ENCODE measurements at regions of chr10 and their contacts with region 1.

Region 1: DNA sequence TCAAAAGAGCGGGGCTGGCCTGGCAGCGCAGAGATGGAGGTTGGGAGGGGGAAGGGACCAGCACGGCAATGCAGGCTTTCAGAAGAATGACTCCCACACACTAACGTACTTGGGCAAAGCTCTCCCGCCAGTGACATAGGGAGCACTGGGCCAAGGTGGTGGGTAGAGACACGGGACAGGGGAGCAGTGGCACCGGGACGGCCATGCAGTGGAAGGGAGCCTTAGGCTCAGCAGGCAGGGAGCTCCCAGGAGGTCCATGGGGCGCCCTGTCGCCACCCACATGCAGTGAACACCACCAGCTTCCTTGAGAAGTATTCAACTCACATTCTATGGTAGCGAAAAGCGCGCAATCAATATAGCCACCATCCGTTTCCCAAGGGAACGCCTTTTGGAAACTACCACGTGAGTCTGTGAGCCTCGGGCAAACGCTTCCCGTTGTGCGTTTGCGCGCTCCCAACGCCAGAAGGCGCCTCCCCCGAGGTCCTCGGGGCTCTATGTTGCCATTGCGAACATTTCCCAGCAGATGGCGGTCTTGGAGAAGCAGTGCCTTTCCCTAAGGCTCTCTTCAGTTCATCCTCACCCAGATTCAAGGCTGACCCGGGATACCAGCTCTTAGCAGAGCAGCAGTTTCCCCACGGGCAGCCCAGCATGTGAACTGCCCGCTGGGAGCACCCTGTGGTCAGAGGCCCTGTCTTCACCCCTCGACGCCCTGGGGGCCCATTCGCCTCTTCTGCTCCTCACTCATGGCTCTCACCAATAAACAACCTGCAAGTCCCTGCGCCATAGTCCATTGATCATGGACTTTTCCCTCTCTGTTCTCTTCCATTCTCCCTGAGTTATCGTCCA is 16.4 kb upstream of the OPALIN start:
- DNase-seq: peak; percentile 45
- ATAC-seq: peak; percentile 91
- H3K4me3 ChIP-seq: peak overlapping the region; percentile 68; the same call in 1 of the 2 replicates
- H3K27ac ChIP-seq: no peak overlapping the region
- H3K4me1 ChIP-seq: peaks cover 8% of the 10 kb centered on the region
- H3K27me3 ChIP-seq: no peaks in the 10 kb centered on the region; a peak in 1 of 4 replicates
- CTCF ChIP-seq: peak; percentile 98 to 100 (median 99)
- EP300 ChIP-seq: no peak
- POLR2A ChIP-seq: no peak
- RAD21 ChIP-seq: peak; percentile 87

Region 2: DNA sequence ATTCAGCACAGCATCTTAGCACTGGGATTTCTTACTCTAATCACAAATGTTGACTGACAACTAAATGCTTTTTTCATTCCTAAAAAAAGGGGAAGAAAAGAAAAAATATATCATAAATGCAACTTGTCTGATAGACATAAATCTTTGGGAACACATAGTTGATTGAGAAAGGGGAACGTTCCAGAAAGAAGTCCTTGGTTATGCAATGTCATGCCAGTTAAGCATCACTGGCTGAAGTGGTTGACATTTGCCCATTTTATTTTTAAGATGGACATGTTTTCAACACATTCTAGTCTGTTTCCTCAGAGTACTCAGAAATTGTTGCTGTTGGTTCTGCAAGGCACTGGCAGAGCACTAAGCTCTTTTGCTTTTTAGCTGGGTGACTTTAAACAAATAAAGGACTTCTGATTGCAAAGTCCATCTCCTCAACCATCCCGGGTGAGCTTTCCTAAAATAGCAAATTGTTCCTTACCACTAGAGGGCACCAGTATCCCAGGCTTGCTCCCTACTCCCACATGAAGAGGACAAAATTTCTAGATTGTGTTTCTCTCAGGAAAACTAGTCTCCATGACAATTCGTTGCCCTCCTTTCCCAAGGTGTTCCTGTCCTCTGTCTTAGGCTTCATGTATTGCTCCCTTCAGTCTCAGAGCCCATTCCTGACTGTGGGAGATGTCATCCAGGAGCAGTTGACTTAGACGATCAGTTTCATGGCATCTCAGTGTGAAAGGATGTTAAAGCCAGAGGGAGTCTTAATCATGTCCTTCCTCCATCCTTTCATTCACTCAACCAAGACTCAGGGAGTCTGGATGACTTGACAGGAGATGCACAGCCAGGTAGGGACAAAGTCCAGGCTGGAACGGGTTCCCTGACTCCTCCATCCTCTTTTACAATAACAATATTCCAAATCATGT is 40.3 kb before region 1 on chr10:
- CTCF ChIA-PET with region 1: interaction called, 13 read pairs
- POLR2A ChIA-PET with region 1: no interaction called
- RAD21 ChIA-PET with region 1: no interaction called
- SMC1A ChIA-PET with region 1: no interaction called
- in situ Hi-C with region 1: no loop called
- intact Hi-C with region 1: no loop called
- DNase-seq: no peak
- ATAC-seq: no peak; the same call in 2 of the 3 replicates
- H3K4me3 ChIP-seq: no peak overlapping the region
- H3K27ac ChIP-seq: no peak overlapping the region
- H3K4me1 ChIP-seq: no peaks in the 10 kb centered on the region
- H3K27me3 ChIP-seq: no peaks in the 10 kb centered on the region
- CTCF ChIP-seq: peak; percentile 62 to 77 (median 62); a peak in 5 of 6 replicates
- EP300 ChIP-seq: no peak
- POLR2A ChIP-seq: no peak
- RAD21 ChIP-seq: peak; percentile 47

Region 3: DNA sequence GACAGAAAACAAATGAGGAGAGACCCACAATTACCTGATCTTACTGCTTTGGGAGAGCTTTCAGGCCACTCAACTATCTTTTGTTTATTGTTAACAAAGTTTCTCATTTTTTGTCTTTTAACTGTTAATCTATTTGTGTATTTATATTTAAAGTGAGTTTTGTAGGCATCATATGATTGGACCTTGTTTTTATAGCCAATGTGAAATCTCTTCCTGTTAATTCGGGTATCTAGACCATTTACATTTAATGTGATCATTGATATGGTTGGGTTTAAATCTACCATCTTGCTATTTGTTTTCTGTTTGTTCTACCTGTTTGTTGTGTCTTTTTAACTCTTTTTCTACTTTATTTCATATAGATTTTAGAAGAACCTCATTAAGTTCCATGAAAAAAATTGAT is 28.9 kb before region 1 on chr10:
- CTCF ChIA-PET with region 1: interaction called, 18 read pairs
- POLR2A ChIA-PET with region 1: no interaction called
- RAD21 ChIA-PET with region 1: no interaction called
- SMC1A ChIA-PET with region 1: no interaction called
- in situ Hi-C with region 1: no loop called
- intact Hi-C with region 1: no loop called
- DNase-seq: no peak
- ATAC-seq: no peak
- H3K4me3 ChIP-seq: no peak overlapping the region
- H3K27ac ChIP-seq: no peak overlapping the region
- H3K4me1 ChIP-seq: no peaks in the 10 kb centered on the region
- H3K27me3 ChIP-seq: no peaks in the 10 kb centered on the region
- CTCF ChIP-seq: no peak
- EP300 ChIP-seq: no peak
- POLR2A ChIP-seq: no peak
- RAD21 ChIP-seq: no peak

Region 4: GRCh38 chr10:96395931-96396877 is 21.0 kb after region 1 on chr10:
- CTCF ChIA-PET with region 1: interaction called, 29 read pairs
- POLR2A ChIA-PET with region 1: no interaction called
- RAD21 ChIA-PET with region 1: interaction called, 5 read pairs
- SMC1A ChIA-PET with region 1: interaction called, 5 read pairs
- in situ Hi-C with region 1: no loop called
- intact Hi-C with region 1: no loop called
- DNase-seq: no peak
- ATAC-seq: peak; percentile 97
- H3K4me3 ChIP-seq: no peak overlapping the region
- H3K27ac ChIP-seq: no peak overlapping the region
- H3K4me1 ChIP-seq: no peaks in the 10 kb centered on the region
- H3K27me3 ChIP-seq: peaks cover 3 to 4% of the 10 kb centered on the region in 2 experiments; a peak in 3 of 4 replicates
- CTCF ChIP-seq: peak; percentile 86 to 91 (median 87)
- EP300 ChIP-seq: no peak
- POLR2A ChIP-seq: no peak
- RAD21 ChIP-seq: peak; percentile 84

Region 5: GRCh38 chr10:96585736-96586418 is 210.7 kb after region 1 on chr10:
- CTCF ChIA-PET with region 1: no interaction called
- POLR2A ChIA-PET with region 1: no interaction called
- RAD21 ChIA-PET with region 1: no interaction called
- SMC1A ChIA-PET with region 1: no interaction called
- in situ Hi-C with region 1: no loop called
- intact Hi-C with region 1: no loop called
- DNase-seq: no peak
- ATAC-seq: peak; percentile 20
- H3K4me3 ChIP-seq: peak overlapping the region; percentile 72
- H3K27ac ChIP-seq: peak overlapping the region; percentile 96
- H3K4me1 ChIP-seq: peaks cover 22% of the 10 kb centered on the region
- H3K27me3 ChIP-seq: no peaks in the 10 kb centered on the region
- CTCF ChIP-seq: no peak
- EP300 ChIP-seq: no peak
- POLR2A ChIP-seq: no peak
- RAD21 ChIP-seq: no peak

Region 6: DNA sequence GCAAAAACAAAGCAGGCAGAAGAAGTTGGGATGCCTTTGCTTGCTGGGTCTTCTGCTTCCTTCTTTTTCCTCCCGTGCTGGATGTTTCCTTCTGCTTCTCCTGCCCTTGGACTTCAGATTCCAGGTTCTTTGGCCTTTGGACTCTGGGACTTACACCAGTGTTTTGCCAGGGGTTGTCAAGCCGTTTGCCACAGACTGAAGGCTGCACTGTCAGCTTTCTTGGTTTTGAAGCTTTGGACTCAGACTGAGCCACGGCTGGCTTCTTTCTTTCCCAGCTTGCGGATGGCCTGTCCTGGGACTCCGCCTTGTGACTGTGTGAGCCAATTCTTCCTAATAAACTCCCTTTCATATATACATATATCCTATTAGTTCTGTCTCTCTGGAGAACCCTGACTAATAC is 445.6 kb after region 1 on chr10:
- CTCF ChIA-PET with region 1: no interaction called
- POLR2A ChIA-PET with region 1: no interaction called
- RAD21 ChIA-PET with region 1: no interaction called
- SMC1A ChIA-PET with region 1: no interaction called
- in situ Hi-C with region 1: no loop called
- intact Hi-C with region 1: no loop called
- DNase-seq: no peak
- ATAC-seq: no peak
- H3K4me3 ChIP-seq: no peak overlapping the region
- H3K27ac ChIP-seq: no peak overlapping the region
- H3K4me1 ChIP-seq: no peaks in the 10 kb centered on the region
- H3K27me3 ChIP-seq: no peaks in the 10 kb centered on the region; a peak in 1 of 4 replicates
- CTCF ChIP-seq: no peak
- EP300 ChIP-seq: no peak
- POLR2A ChIP-seq: no peak
- RAD21 ChIP-seq: no peak

Measured in GM12878 (cell line).